ENCODE measurements at regions of chr6 and their contacts with region 1.

Region 1: DNA sequence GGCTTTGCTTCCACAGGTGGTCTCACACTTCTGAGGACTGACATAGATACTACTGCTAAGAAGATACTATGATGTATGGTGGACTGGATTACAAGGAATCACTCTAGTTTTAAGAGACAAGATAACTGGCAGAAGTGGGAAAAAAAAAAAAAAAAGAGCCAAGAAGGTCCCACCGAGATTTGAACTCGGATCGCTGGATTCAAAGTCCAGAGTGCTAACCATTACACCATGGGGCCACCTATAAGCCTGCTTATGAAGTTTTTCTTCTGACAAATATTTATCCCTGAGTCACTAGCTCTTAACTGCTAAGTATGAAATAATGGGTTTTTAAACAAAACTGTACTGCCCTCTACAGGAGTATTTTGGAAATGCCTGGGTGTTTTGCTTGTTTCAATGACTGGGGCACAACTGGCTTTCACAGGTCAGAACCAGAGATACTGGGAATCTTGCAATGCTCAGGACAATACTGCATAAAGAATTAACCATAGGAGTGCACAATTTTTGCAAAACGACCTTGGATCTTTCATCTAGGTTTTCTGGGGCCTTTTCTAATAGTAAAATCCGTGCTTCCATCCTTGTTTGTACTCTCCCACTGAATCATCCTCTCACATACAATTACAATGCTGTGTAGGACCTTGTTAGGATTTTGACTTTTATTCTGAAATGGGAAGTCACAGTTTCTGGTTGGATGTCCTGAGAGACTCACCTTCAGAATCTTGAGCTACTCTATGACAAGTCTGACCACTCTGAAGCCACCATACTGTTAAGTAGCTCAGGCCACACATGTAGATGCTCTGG is 116.3 kb downstream of the OR2B2 start:
- DNase-seq: peak; percentile 96
- ATAC-seq: peak; percentile 60
- H3K4me3 ChIP-seq: peak overlapping the region in 1 of 2 experiments; percentile 9; a peak in 1 of 4 replicates
- H3K27ac ChIP-seq: no peak overlapping the region
- H3K4me1 ChIP-seq: peaks cover 5% of the 10 kb centered on the region
- H3K27me3 ChIP-seq: no peaks in the 10 kb centered on the region
- CTCF ChIP-seq: peak; percentile 80

Region 2: GRCh38 chr6:27772261-27773001 is 23.5 kb before region 1 on chr6:
- CTCF ChIA-PET with region 1: interaction called, 19 read pairs
- POLR2A ChIA-PET with region 1: interaction called, 13 read pairs
- in situ Hi-C with region 1: no loop called
- intact Hi-C with region 1: no loop called
- DNase-seq: peak; percentile 75
- ATAC-seq: peak; percentile 98
- H3K4me3 ChIP-seq: peak overlapping the region; percentile 35 to 65
- H3K27ac ChIP-seq: peak overlapping the region; percentile 59
- H3K4me1 ChIP-seq: peaks cover 13% of the 10 kb centered on the region
- H3K27me3 ChIP-seq: no peaks in the 10 kb centered on the region
- CTCF ChIP-seq: peak; percentile 97

Region 3: GRCh38 chr6:27777614-27778355 is 18.1 kb before region 1 on chr6:
- CTCF ChIA-PET with region 1: interaction called, 19 read pairs
- POLR2A ChIA-PET with region 1: interaction called, 13 read pairs
- in situ Hi-C with region 1: no loop called
- intact Hi-C with region 1: no loop called
- DNase-seq: peak; percentile 68
- ATAC-seq: peak; percentile 88
- H3K4me3 ChIP-seq: peak overlapping the region; percentile 48 to 68
- H3K27ac ChIP-seq: peak overlapping the region; percentile 77
- H3K4me1 ChIP-seq: peaks cover 6% of the 10 kb centered on the region
- H3K27me3 ChIP-seq: no peaks in the 10 kb centered on the region
- CTCF ChIP-seq: no peak